Common myeloid progenitor, CD34-positive (primary cell): ENCODE measurements at regions of chr4 and their contacts with region 1.

Region 1: DNA sequence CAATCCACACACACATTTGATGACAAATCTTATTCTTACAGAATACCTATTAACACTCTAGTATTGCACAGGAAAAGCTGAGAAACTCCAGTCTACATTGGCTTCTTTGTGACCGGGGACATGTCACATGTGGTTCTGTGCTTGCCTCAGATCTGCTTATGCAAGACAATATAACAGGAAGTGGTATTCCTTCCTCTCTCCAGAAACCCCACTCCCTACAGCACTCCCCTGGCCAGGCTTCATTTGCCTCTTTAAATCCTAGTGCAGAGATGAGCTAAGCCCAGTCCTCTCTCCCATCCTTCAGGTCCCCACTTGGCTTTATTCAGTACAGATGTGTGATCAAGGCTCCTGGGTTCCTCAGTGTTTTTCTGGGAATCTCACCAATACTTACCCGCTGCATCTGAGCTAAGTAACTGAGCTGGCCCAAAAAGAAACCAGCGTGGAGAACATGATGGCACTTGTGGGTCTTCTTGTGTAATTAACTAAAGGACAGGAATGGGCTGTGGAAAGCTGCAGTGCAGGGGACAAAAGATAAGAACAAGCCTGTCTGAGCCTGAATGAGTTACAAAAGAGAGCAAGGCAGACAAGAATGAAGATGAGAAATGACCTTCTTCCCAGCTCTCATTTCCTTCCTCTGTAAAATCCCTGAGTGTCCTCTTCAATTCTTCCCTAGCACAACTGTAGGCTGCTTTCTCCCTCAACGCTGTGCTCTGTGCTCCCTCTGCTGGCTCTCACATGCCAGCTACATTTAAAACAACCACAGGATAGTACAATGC is 105.6 kb downstream of the HNRNPD start:
- DNase-seq: peak; percentile 57 to 72 (median 65)
- H3K4me3 ChIP-seq: no peak overlapping the region
- H3K27ac ChIP-seq: no peak overlapping the region
- H3K4me1 ChIP-seq: peaks cover 0 to 11% (median 7%) of the 10 kb centered on the region in 4 experiments
- H3K27me3 ChIP-seq: no peaks in the 10 kb centered on the region

Region 2: DNA sequence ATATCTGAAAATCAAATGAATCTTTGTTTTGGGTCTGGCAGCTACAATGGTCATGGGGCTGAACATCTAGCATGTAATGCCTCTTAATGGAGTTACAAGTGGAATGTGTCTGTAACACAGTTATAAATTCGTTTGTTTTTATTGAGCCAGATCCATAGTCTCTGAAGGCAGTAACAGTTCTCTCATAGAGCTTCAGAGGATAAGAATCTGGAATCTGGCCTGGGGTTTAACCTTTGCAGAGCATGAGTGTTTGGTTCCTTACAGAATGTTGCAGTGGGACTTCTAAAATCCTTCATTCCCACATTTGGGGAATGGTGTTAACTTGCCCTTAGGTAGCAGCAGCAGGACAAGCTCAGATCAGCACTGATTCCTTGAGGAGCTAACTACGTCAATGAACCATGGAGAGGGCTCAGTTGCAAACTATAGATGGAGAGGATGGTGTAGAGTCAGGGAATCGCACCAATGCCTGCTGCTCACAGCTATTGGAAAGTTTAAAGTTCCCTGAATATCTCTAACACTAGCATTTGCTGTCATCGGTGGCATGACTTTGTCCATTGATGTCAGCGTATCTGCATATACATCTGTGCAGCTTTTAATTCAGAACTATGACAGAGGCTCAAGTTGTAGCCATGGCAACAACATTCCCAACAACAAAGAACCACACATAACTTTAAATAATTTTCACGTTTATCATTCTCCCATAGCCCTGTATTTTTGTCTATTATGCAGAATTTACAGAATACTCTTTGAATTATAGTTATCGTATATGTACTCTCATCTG is 868.7 kb before region 1 on chr4:
- CTCF ChIA-PET with region 1: interaction called, 13 read pairs
- POLR2A ChIA-PET with region 1: no interaction called
- DNase-seq: peak in 2 of 3 donors; percentile 13 to 25
- H3K4me3 ChIP-seq: no peak overlapping the region
- H3K27ac ChIP-seq: no peak overlapping the region
- H3K4me1 ChIP-seq: no peaks in the 10 kb centered on the region
- H3K27me3 ChIP-seq: no peaks in the 10 kb centered on the region

Region 3: GRCh38 chr4:81405894-81406401 is 862.3 kb before region 1 on chr4:
- CTCF ChIA-PET with region 1: interaction called, 14 read pairs
- POLR2A ChIA-PET with region 1: no interaction called
- DNase-seq: peak; percentile 73 to 89 (median 84)
- H3K4me3 ChIP-seq: peak overlapping the region in 4 of 7 experiments; percentile 5 to 57 (median 46)
- H3K27ac ChIP-seq: no peak overlapping the region
- H3K4me1 ChIP-seq: peaks cover 0 to 9% (median 6%) of the 10 kb centered on the region in 4 experiments
- H3K27me3 ChIP-seq: no peaks in the 10 kb centered on the region

Region 4: DNA sequence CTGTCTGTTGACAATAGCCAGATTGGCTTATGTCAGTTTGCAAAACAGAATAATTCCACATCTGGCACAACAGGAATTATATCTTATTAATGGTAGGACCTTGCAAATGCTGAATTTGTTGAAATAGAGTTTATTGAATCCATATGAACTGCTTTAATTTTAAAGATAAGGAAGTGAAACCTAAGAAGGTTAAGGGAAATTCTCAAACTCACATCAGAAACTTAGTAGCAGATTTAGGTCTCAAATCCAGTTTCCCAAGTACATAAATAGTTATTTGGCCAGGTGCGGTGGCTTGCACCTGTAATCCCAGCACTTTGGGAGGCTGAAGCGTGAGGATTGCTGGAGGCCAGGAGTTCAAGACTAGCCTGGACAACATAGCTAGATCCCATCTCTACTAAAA is 11.5 kb before region 1 on chr4:
- CTCF ChIA-PET with region 1: interaction called, 16 read pairs
- POLR2A ChIA-PET with region 1: no interaction called
- DNase-seq: no peak
- H3K4me3 ChIP-seq: no peak overlapping the region
- H3K27ac ChIP-seq: no peak overlapping the region
- H3K4me1 ChIP-seq: no peaks in the 10 kb centered on the region
- H3K27me3 ChIP-seq: no peaks in the 10 kb centered on the region

Region 5: GRCh38 chr4:82284858-82285805 is 16.9 kb after region 1 on chr4:
- CTCF ChIA-PET with region 1: interaction called, 31 read pairs
- POLR2A ChIA-PET with region 1: no interaction called
- DNase-seq: peak; percentile 99 to 100 (median 100)
- H3K4me3 ChIP-seq: peak overlapping the region in 6 of 7 experiments; percentile 58 to 81 (median 67)
- H3K27ac ChIP-seq: no peak overlapping the region
- H3K4me1 ChIP-seq: peaks cover 2 to 12% (median 6%) of the 10 kb centered on the region in 4 experiments
- H3K27me3 ChIP-seq: peaks cover 0 to 2% (median 2%) of the 10 kb centered on the region in 5 experiments